ENCODE measurements at regions of chr2 and their contacts with region 1.

Region 1: DNA sequence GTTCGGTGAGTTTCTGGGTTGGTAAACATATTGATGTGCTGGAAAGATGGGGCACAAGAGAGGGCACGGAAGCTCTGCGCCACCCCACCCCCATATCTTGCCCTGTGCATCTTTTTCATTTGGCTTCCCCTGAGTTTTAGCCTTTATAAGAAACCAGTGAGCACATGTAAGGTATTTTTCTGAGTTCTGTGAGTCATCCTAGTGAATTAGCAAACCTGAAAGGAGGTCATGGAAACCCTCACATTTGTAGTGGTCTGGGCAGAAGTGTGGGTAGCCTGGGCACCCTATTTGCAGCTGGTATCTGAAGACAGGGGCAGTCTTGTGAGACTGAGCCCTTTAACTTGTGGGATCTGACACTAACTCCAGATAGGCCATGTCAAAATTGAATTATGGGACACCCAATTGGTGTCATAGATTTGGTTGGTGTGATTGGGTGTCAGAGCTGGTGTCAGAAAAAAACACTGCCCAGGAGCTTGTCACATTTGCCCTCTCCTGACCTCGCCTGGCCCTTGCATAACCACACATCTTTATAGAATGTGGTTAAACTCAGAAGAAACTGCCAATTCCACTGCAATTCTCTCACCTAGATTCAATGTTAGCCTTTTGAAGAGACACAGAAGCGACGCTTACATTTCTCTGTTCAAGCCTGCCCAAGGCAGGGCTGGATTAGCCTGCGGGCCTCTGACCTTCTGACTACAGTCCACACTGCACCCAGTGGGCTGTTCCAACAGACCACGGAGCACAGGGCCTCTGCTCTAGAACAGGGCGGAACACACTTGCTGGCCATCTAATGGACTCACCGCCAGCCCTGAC is 12.0 kb upstream of the GALM start:
- DNase-seq: peak in 1 of 3 donors; percentile 10
- H3K4me3 ChIP-seq: peak overlapping the region in 1 of 3 experiments; percentile 27
- H3K4me3 Mint-ChIP-seq: peak overlapping the region in 1 of 2 donors; percentile 15
- H3K27ac ChIP-seq: peak overlapping the region; percentile 10 to 11
- H3K27ac Mint-ChIP-seq: peak overlapping the region in 5 of 7 donors; percentile 57 to 81 (median 64)
- H3K4me1 ChIP-seq: peaks cover 29 to 36% of the 10 kb centered on the region in 2 donors
- H3K4me1 Mint-ChIP-seq: peaks cover 34% of the 10 kb centered on the region
- H3K27me3 ChIP-seq: no peaks in the 10 kb centered on the region
- H3K27me3 Mint-ChIP-seq: peaks cover 0 to 5% (median 1%) of the 10 kb centered on the region in 3 donors
- CTCF ChIP-seq: no peak

Region 2: GRCh38 chr2:38380397-38381130 is 273.4 kb before region 1 on chr2:
- intact Hi-C with region 1: no loop called
- DNase-seq: peak; percentile 80 to 87 (median 84)
- H3K4me3 ChIP-seq: peak overlapping the region in 2 of 3 experiments; percentile 34 to 70
- H3K4me3 Mint-ChIP-seq: peak overlapping the region; percentile 66 to 90
- H3K27ac ChIP-seq: peak overlapping the region; percentile 47 to 82
- H3K27ac Mint-ChIP-seq: peak overlapping the region; percentile 90 to 98 (median 97)
- H3K4me1 ChIP-seq: peaks cover 39 to 44% of the 10 kb centered on the region in 2 donors
- H3K4me1 Mint-ChIP-seq: peaks cover 33% of the 10 kb centered on the region
- H3K27me3 ChIP-seq: no peaks in the 10 kb centered on the region
- H3K27me3 Mint-ChIP-seq: peaks cover 0 to 1% (median 0%) of the 10 kb centered on the region in 3 donors
- CTCF ChIP-seq: no peak

Region 3: DNA sequence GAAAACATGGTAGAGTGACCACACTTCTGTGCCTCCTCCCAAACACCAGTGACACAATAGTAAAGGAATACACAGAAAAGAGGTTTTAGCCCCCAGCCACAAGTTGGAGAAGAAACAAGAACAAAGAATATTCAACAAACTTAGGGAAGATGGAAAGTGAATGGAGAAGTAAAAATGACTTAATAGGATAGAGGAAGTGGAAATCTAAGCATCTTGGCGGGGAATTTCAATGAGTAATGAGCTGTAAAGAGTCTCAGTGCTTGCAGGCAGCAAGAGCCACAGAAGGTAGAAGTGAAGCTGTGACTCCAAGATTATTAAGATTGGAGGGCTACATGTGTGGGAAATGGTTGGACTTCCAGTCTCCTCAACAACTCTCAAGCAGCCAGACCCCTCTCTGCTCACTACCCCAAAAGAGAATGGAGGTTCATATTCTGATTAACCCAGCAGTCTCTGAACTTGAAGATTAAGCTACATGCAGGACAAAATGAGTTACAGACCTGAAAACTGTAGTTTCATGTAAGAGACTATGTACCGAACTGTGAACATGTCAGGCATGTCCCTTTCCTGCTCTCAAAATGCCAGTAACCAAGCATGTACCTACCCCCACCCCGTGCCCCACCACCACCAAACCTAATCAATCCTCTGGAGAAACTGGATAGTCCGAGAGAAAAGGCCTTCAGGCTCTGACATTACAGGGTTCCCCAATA is 34.3 kb before region 1 on chr2:
- intact Hi-C with region 1: loop called in 1 of 2 experiments (anchors 5 kb)
- DNase-seq: peak; percentile 82 to 95 (median 95)
- H3K4me3 ChIP-seq: peak overlapping the region in 1 of 3 experiments; percentile 16
- H3K4me3 Mint-ChIP-seq: peak overlapping the region in 1 of 2 donors; percentile 63
- H3K27ac ChIP-seq: peak overlapping the region in 1 of 2 donors; percentile 61
- H3K27ac Mint-ChIP-seq: peak overlapping the region; percentile 61 to 91 (median 89)
- H3K4me1 ChIP-seq: peaks cover 50 to 66% of the 10 kb centered on the region in 2 donors
- H3K4me1 Mint-ChIP-seq: peaks cover 59% of the 10 kb centered on the region
- H3K27me3 ChIP-seq: peaks cover 0 to under 1% of the 10 kb centered on the region in 2 donors
- H3K27me3 Mint-ChIP-seq: peaks cover 0 to 8% (median 7%) of the 10 kb centered on the region in 3 donors
- CTCF ChIP-seq: no peak

Measured in CD14-positive monocyte (primary cell).